Posterior vena cava (tissue), 2 donors: ENCODE measurements at regions of chr16 and their contacts with region 1.

Region 1: GRCh38 chr16:62261760-62262159 is 225.5 kb upstream of the CDH8 start:
- DNase-seq: no peak

Region 2: GRCh38 chr16:61313931-61314330 is 947.8 kb before region 1 on chr16:
- intact Hi-C with region 1: loop called in 1 of 2 experiments (anchors 10 kb)
- DNase-seq: no peak